WTC11 (cell line): ENCODE measurements at regions of chr2 and their contacts with region 1.

Region 1: GRCh38 chr2:66587216-66587615 is 152.3 kb downstream of the MEIS1 start:
- DNase-seq: peak; percentile 71
- ATAC-seq: peak; percentile 95
- H3K4me3 Mint-ChIP-seq: no peak overlapping the region
- H3K27ac Mint-ChIP-seq: no peak overlapping the region
- H3K4me1 Mint-ChIP-seq: no peaks in the 10 kb centered on the region
- H3K27me3 Mint-ChIP-seq: peaks cover 11% of the 10 kb centered on the region
- CTCF ChIP-seq: peak; percentile 30; the same call in 1 of the 2 replicates

Region 2: DNA sequence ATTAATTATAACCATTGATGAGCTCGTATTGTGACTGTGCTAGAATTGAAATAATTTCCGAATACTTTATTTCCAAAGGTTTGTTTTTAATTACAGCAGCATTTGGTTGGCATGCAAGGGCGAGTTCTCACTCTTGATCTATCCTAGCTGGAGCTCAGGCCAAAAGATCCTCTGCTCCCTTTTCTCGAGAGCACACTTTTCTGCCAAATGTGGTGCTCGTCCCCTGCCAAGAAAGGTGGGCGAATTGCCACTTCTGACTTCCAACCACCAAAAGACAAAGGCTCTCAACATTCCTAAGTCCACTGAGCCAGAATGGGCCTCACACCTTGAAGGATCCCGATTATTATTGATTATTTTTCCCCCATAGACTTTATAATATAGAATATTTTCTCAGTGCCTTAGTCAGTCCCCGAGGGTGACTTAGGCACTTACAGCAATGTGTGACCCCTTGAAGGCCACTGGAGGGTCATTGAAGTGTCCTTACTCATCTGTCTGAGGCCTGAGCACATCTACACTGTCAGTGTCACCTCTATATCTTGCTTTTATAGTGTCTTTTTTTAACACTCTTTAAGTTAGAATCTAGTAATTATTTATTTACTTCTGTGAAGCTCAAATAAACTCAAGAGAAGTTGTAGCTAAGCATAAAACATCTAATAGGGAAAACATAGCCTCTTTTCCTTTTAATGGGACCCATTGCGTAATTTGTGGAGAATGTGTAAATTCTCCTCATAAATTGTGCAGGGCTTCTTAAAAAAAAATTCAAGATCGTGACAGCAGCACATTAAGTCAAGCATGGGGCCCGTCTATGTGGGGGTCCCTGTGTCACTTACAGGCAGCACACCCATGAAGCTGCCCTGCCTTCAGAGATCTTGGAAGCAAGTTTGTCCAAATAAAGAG is 54.0 kb before region 1 on chr2:
- CTCF ChIA-PET with region 1: no interaction called
- POLR2A ChIA-PET with region 1: no interaction called
- DNase-seq: no peak
- ATAC-seq: no peak
- H3K4me3 Mint-ChIP-seq: no peak overlapping the region
- H3K27ac Mint-ChIP-seq: no peak overlapping the region
- H3K4me1 Mint-ChIP-seq: peaks cover 23% of the 10 kb centered on the region
- H3K27me3 Mint-ChIP-seq: no peaks in the 10 kb centered on the region
- CTCF ChIP-seq: no peak

Region 3: GRCh38 chr2:66634784-66635183 is 47.6 kb after region 1 on chr2:
- CTCF ChIA-PET with region 1: no interaction called
- POLR2A ChIA-PET with region 1: interaction called, 10 read pairs
- DNase-seq: no peak
- ATAC-seq: no peak
- H3K4me3 Mint-ChIP-seq: no peak overlapping the region
- H3K27ac Mint-ChIP-seq: no peak overlapping the region
- H3K4me1 Mint-ChIP-seq: no peaks in the 10 kb centered on the region
- H3K27me3 Mint-ChIP-seq: no peaks in the 10 kb centered on the region; the same call in 1 of the 2 replicates
- CTCF ChIP-seq: no peak